ENCODE measurements at regions of chr1 and their contacts with region 1.

Region 1: GRCh38 chr1:234579967-234580366 is 30.0 kb downstream of the IRF2BP2 start:
- DNase-seq: no peak
- H3K4me3 ChIP-seq: no peak overlapping the region
- H3K27ac ChIP-seq: no peak overlapping the region
- H3K4me1 ChIP-seq: peaks cover 8 to 32% of the 10 kb centered on the region in 2 donors
- H3K27me3 ChIP-seq: no peaks in the 10 kb centered on the region
- CTCF ChIP-seq: no peak

Region 2: DNA sequence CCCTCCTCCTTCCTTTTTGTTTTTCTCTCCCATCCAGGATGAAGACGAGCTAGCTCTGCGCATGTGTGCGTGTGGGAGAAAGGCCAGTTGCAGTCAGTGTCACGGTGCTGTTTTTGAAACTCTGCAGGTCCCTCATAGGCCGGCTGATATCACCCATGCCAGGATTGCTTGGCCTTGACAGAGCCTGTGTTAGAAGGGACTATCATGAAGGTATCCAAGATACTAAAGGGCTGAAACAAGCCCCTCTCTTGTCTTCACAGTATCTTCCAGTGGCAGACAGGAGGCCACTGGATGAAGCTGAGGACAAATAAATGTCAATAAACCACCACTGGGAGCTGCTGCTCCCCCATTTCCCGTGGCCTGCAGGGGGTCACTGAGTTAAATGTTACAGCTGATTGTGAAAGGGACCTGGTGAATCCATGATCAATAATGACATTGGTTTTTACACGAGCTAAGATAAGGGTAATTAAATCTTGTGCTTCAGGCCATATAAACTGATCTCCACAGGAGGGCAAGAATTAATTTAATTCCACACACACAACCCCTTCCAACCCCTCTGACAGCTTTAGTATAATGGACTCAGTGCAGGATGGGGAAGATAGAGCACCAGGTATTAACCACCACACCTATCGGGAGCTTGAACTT is 36.4 kb before region 1 on chr1:
- intact Hi-C with region 1: loop called (anchors 2 kb)
- DNase-seq: peak in 1 of 2 donors; percentile 35
- H3K4me3 ChIP-seq: no peak overlapping the region
- H3K27ac ChIP-seq: peak overlapping the region; percentile 43 to 58
- H3K4me1 ChIP-seq: peaks cover 5 to 42% of the 10 kb centered on the region in 2 donors
- H3K27me3 ChIP-seq: no peaks in the 10 kb centered on the region
- CTCF ChIP-seq: no peak

Region 3: DNA sequence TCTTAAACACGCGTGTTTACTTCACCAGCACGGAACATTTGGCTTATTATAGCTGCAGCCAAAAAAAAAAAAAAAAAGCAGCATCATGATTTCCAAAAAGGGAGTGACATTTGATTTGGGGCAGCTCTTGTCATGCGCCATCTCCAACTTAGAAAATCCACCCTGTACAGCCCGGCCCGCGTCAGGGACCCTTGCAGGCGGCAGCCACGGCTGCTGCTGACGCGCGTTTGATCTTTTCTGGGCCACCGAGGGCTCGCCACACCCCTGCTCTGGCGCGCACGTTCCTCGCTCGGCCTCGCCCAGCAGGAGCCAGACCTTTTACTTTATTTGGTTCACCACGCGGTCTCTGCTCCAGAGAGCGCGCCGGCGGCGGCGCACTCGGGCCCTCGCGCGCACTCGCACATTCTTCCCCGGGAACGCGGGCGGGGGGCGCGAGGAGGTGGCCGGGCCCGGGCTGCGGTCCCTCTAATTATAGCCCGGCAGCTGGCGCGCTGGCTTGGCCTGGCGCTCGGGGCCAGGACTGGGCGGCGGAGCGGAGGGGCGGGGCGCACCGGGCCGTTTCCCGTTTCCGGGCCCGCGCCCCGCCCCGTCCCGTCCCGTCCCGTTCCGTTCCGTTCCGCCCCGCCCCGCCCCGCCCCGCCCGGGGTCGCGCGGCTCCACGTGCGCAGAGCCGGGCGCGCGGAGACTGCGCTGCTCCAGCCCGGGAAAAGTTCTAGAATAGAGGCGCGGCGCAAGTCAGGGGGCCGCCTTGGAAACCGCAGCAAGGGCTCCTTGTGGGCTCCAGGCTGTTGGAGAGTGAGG is 19.9 kb after region 1 on chr1:
- intact Hi-C with region 1: loop called (anchors 1 kb)
- DNase-seq: peak; percentile 76 to 96
- H3K4me3 ChIP-seq: peak overlapping the region; percentile 49 to 57
- H3K27ac ChIP-seq: peak overlapping the region; percentile 96 to 99
- H3K4me1 ChIP-seq: peaks cover 11 to 40% of the 10 kb centered on the region in 2 donors
- H3K27me3 ChIP-seq: no peaks in the 10 kb centered on the region
- CTCF ChIP-seq: peak in 1 of 3 experiments; percentile 9

Measured in ascending aorta (tissue), 2 donors.